HEK293 (cell line): ENCODE measurements at regions of chr5 and their contacts with region 1.

Region 1: DNA sequence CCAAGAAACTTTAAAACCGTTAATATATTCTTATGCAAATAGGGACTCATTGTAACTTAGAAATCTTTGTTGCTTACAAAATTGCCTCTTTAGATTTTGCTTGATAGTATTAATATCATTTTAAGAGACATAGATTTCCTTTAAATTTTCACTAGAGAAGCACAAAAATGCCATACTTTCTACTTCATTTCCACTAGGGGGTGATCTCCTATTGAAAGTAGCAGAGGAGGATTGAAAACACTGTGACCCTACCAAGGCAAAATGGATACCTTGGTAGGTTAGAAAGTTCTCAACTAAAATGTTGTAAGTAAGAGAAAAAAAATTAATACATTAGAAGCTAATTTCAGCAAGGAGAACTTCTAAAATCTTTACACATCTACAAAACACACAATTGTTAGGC is 204.9 kb downstream of the CHSY3 start:
- H3K4me3 ChIP-seq: no peak overlapping the region
- H3K27ac ChIP-seq: no peak overlapping the region
- H3K4me1 ChIP-seq: no peaks in the 10 kb centered on the region
- CTCF ChIP-seq: no peak

Region 2: DNA sequence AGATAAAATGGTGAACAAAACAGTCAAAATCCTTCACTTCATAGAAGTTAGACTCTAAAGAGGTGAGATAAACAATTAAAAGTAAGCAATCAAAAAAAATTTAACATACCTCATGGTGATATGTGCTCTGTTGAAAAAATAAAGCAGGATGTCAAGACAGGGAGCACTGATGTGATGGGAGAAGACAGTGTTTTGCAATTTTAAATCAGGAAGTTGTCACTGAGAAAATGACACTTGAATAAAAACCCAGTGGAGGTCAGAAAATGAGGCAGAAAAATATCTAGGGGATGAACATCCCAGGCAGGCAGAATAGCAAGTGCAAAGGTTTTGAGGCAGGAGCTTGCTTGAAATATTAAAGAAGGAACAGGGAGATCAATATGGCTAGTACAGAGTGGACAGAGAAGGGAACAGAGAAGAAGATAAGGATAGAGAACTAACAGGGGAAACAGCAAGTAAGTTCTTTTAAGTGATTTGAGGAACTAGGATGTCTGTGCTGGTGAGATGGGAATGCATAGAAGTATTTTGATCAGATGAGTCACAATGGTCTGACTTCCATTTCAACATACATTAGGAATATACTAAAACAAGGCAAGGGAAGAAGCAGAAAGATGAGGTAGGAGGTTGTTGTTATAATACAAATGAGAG is 74.5 kb before region 1 on chr5:
- CTCF ChIA-PET with region 1: no interaction called
- POLR2A ChIA-PET with region 1: no interaction called
- H3K4me3 ChIP-seq: no peak overlapping the region
- H3K27ac ChIP-seq: no peak overlapping the region
- H3K4me1 ChIP-seq: no peaks in the 10 kb centered on the region
- CTCF ChIP-seq: no peak

Region 3: GRCh38 chr5:130126746-130127145 is 17.6 kb after region 1 on chr5:
- CTCF ChIA-PET with region 1: interaction called, 16 read pairs
- POLR2A ChIA-PET with region 1: no interaction called
- H3K4me3 ChIP-seq: no peak overlapping the region
- H3K27ac ChIP-seq: no peak overlapping the region
- H3K4me1 ChIP-seq: no peaks in the 10 kb centered on the region
- CTCF ChIP-seq: no peak